PC-3 (cell line): ENCODE measurements at regions of chr7 and their contacts with region 1.

Region 1: DNA sequence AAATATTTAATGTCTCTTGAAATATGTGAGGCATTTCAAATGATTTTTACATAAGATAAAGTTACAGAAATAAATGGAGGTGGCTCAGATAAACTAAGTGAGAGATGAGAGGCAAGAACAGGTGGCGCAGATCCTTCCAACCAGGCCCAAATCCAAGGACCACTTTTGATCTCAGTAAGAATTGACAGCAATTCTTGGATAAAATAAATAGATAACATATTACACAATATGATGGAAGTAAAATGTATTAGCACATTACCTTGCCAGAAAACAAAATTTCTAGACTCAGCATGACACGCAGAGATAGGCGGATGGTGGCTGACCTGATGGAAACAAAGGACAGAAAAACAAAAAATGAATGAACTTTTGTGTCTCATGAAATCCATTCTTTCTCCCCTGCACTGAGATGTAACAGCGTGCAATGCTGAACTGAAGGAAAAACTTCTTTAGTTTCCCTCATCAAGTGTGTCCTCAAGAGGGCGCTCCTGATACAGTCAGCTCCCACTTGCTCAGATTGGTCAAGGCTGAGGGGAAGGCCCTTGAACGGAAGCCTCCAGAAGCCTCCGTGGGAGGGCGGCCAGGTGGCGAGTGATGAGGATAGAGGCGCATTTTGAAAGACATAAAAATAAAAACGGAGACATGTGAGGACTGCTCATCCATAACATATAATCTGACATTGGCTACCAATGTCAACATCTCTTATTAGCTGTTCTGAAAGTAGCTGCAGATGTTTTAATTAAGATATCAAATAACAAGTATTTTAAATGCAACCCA is 62.8 kb upstream of the GSDME start:
- DNase-seq: peak; percentile 89
- ATAC-seq: peak; percentile 57
- H3K4me3 ChIP-seq: peak overlapping the region; percentile 46
- H3K27ac ChIP-seq: peak overlapping the region; percentile 97
- H3K4me1 ChIP-seq: peaks cover 39% of the 10 kb centered on the region
- H3K27me3 ChIP-seq: no peaks in the 10 kb centered on the region
- CTCF ChIP-seq: peak; percentile 95

Region 2: DNA sequence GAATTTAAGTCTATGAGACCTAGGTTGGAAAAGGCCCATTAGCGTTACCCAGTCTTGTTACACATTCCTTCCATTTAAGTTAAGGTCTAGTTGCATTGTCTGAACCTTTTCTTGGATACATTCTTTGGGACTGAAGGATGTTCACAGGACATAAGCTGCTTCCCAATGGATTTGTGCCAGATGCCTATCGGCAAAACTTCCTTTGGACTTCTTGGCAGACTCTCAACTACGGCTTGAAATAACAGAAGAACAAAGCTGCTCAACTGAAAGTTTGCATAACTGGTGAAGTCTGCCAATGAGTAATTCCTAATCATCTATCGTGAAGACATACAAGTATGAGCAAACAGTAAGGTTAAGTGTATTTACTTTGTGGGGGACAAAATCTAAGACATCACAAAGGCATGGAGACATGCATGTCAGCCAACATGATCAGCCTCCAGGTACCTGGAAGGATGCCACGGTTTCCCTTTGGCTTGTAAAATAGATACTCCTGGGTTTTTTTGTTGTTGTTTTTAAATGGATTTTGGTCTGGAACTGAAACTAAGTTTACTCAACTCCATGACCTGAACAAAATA is 1485.5 kb before region 1 on chr7:
- CTCF ChIA-PET with region 1: no interaction called
- POLR2A ChIA-PET with region 1: no interaction called
- intact Hi-C with region 1: loop called (anchors 10 kb)
- DNase-seq: peak; percentile 99
- ATAC-seq: peak; percentile 76
- H3K4me3 ChIP-seq: peak overlapping the region; percentile 26; the same call in 1 of the 2 replicates
- H3K27ac ChIP-seq: peak overlapping the region; percentile 98
- H3K4me1 ChIP-seq: peaks cover 45% of the 10 kb centered on the region
- H3K27me3 ChIP-seq: no peaks in the 10 kb centered on the region
- CTCF ChIP-seq: no peak

Region 3: DNA sequence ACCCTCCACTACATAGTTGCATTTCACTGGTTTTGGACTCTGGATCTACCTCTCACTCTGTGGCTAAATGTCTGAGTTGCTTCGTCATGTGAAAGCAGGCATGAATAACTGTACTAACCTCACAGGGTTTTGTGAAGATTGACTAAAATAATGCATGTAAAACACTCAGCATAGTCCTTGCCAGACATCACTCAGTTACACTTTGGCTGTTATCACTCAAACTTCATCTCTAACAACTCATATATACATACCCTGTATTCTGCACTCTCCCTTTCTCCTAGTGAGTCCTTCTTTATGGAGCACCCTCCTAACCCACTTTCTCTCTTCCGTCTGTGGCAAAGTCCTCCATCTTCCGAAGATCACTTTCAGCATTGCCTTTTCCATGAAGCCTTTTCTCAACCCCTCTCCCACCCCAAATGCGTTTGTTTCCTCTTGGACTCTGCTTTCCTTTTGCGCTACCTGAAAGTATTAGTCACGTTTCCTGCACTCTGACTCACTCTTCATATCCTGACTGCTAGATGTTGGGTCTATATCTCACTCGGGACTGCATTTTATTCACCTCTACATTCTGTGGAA is 87.3 kb after region 1 on chr7:
- CTCF ChIA-PET with region 1: no interaction called
- POLR2A ChIA-PET with region 1: no interaction called
- intact Hi-C with region 1: loop called (anchors 1 kb)
- DNase-seq: peak; percentile 81
- ATAC-seq: peak; percentile 92
- H3K4me3 ChIP-seq: peak overlapping the region; percentile 43; the same call in 1 of the 2 replicates
- H3K27ac ChIP-seq: peak overlapping the region; percentile 80
- H3K4me1 ChIP-seq: peaks cover 52% of the 10 kb centered on the region
- H3K27me3 ChIP-seq: no peaks in the 10 kb centered on the region
- CTCF ChIP-seq: no peak

Region 4: DNA sequence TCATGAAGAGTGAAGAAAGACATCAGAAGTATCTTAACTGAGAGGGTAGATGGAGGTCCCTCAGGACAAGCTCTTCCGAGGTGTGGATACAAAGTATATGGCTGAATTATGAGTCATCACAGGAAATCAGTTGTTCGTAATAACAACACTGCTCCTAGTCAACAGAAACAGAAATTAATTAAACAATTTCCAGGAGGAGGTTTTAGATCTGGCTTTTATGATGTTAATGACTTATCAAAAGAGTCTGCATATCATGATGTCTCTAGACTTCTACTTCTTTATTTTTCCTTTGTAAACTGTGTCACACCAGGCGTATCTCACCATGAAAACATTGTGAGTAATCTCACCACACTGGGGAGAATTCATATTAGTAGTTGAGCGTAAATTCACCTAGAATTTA is 128.6 kb after region 1 on chr7:
- CTCF ChIA-PET with region 1: no interaction called
- POLR2A ChIA-PET with region 1: no interaction called
- intact Hi-C with region 1: loop called (anchors 1 kb)
- DNase-seq: no peak
- ATAC-seq: peak; percentile 23; the same call in 1 of the 2 replicates
- H3K4me3 ChIP-seq: no peak overlapping the region
- H3K27ac ChIP-seq: no peak overlapping the region
- H3K4me1 ChIP-seq: peaks cover 17% of the 10 kb centered on the region
- H3K27me3 ChIP-seq: no peaks in the 10 kb centered on the region
- CTCF ChIP-seq: no peak

Region 5: DNA sequence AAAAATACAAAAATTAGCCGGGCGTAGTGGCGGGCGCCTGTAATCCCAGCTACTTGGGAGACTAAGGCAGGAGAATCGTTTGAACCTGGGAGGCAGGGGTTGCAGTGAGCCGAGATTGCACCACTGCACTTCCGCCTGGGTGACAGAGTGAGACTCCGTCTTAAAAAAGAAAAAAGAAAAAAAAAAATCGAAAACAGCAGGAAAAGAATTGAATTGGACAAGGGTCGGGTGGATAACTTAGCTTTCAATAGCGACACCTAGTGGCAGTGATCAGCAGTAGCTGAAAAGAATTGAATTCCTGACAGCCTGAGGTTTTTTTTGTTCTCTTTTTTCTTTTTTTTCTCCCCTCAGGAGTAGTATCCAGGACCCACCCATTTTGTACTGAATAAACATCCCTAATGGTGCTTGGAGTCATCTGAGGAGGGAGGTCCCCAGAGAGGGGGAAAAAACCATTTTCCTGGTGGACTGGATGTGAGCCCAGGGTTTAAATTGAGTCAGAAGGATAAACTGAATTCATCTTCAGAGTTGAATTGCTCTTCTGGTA is 249.9 kb after region 1 on chr7:
- CTCF ChIA-PET with region 1: interaction called, 8 read pairs
- POLR2A ChIA-PET with region 1: no interaction called
- intact Hi-C with region 1: loop called (anchors 1 kb)
- DNase-seq: peak; percentile 87
- ATAC-seq: peak; percentile 76
- H3K4me3 ChIP-seq: peak overlapping the region; percentile 40
- H3K27ac ChIP-seq: no peak overlapping the region
- H3K4me1 ChIP-seq: peaks cover 13% of the 10 kb centered on the region
- H3K27me3 ChIP-seq: no peaks in the 10 kb centered on the region
- CTCF ChIP-seq: peak; percentile 80